Caco-2 (cell line): ENCODE measurements at regions of chrX and their contacts with region 1.

Region 1: DNA sequence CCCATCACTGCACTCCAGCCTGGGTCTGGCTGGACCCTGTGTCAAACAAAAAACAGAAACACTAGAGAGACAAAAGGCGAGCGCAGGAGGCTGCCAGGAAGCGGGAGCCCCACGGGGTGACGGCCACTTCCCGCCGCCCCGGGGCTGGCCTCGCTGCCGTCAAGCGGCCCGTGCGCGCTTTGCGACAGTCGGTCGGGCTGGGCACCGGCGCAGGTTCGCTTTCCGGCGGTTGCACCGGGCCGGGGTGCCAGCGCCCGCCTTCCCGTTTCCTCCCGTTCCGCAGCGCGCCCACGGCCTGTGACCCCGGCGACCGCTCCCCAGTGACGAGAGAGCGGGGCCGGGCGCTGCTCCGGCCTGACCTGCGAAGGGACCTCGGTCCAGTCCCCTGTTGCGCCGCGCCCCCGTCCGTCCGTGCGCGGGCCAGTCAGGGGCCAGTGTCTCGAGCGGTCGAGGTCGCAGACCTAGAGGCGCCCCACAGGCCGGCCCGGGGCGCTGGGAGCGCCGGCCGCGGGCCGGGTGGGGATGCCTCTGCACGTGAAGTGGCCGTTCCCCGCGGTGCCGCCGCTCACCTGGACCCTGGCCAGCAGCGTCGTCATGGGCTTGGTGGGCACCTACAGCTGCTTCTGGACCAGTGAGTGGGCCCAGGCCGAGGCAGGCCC is at the start of gene TAFAZZIN:
- DNase-seq: peak; percentile 65 to 80
- H3K4me3 ChIP-seq: peak within 1 kb of the TSS; percentile 73
- H3K4me3 Mint-ChIP-seq: peak within 1 kb of the TSS; percentile 79
- H3K27ac Mint-ChIP-seq: peak within 1 kb of the TSS; percentile 80
- H3K4me1 ChIP-seq: peaks cover 5% of the 10 kb centered on the region; the same call in 1 of the 2 replicates
- H3K4me1 Mint-ChIP-seq: peaks cover 7% of the 10 kb centered on the region
- H3K27me3 ChIP-seq: no peaks in the 10 kb centered on the region
- H3K27me3 Mint-ChIP-seq: no peaks in the 10 kb centered on the region
- CTCF ChIP-seq: no peak
- total RNA-seq, gene TAFAZZIN: 30.2 and 34.0 TPM in 2 replicates

Region 2: GRCh38 chrX:154428176-154429010 is 16.9 kb after region 1 on chrX and contains the start of gene ATP6AP1:
- CTCF ChIA-PET with region 1: no interaction called
- POLR2A ChIA-PET with region 1: no interaction called
- intact Hi-C with region 1: loop called (anchors 1 kb)
- DNase-seq: peak; percentile 93 to 95
- H3K4me3 ChIP-seq: peak within 1 kb of the TSS; percentile 73
- H3K4me3 Mint-ChIP-seq: peak within 1 kb of the TSS; percentile 82
- H3K27ac Mint-ChIP-seq: peak within 1 kb of the TSS; percentile 84
- H3K4me1 ChIP-seq: peaks cover 10% of the 10 kb centered on the region; the same call in 1 of the 2 replicates
- H3K4me1 Mint-ChIP-seq: peaks cover 14% of the 10 kb centered on the region
- H3K27me3 ChIP-seq: no peaks in the 10 kb centered on the region
- H3K27me3 Mint-ChIP-seq: no peaks in the 10 kb centered on the region
- CTCF ChIP-seq: no peak
- total RNA-seq, gene ATP6AP1: 107 and 112 TPM in 2 replicates

Region 3: GRCh38 chrX:154478728-154479622 is 67.5 kb after region 1 on chrX and contains the start of gene LAGE3:
- CTCF ChIA-PET with region 1: no interaction called
- POLR2A ChIA-PET with region 1: no interaction called
- intact Hi-C with region 1: no loop called
- DNase-seq: peak; percentile 91 to 96
- H3K4me3 ChIP-seq: peak within 1 kb of the TSS; percentile 64
- H3K4me3 Mint-ChIP-seq: peak within 1 kb of the TSS; percentile 76
- H3K27ac Mint-ChIP-seq: peak within 1 kb of the TSS; percentile 86
- H3K4me1 ChIP-seq: no peaks in the 10 kb centered on the region
- H3K4me1 Mint-ChIP-seq: no peaks in the 10 kb centered on the region
- H3K27me3 ChIP-seq: no peaks in the 10 kb centered on the region
- H3K27me3 Mint-ChIP-seq: no peaks in the 10 kb centered on the region
- CTCF ChIP-seq: no peak
- total RNA-seq, gene LAGE3: 26.0 and 26.7 TPM in 2 replicates

Region 4: DNA sequence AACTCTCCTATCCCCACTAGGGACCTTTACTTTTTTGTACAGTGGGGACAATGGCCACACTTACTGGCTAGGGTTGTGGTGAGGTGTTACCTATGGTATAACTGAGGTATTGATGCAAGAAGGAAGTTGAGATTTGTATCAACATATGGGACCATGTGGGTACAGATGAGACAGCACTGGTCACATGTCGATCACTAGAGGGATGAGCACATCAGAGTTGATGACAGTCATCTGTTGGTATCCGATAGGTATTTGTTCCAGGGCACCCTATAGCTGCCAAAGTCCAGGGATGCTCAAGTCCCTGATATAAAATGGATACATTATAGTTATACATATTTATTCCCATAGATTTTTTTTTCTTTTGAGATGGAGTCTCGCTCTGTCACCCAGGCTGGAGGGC is 91.5 kb after region 1 on chrX:
- CTCF ChIA-PET with region 1: no interaction called
- POLR2A ChIA-PET with region 1: no interaction called
- intact Hi-C with region 1: no loop called
- DNase-seq: no peak
- H3K4me3 ChIP-seq: no peak overlapping the region
- H3K4me3 Mint-ChIP-seq: no peak overlapping the region
- H3K27ac Mint-ChIP-seq: no peak overlapping the region
- H3K4me1 ChIP-seq: no peaks in the 10 kb centered on the region
- H3K4me1 Mint-ChIP-seq: no peaks in the 10 kb centered on the region
- H3K27me3 ChIP-seq: no peaks in the 10 kb centered on the region
- H3K27me3 Mint-ChIP-seq: no peaks in the 10 kb centered on the region
- CTCF ChIP-seq: no peak